ENCODE measurements at regions of chr11 and their contacts with region 1.

Region 1: GRCh38 chr11:126440792-126441514 is 85.5 kb downstream of the ST3GAL4 start:
- DNase-seq: peak in 1 of 2 donors; percentile 86
- H3K4me3 ChIP-seq: peak overlapping the region in 1 of 2 donors; percentile 26
- H3K27ac ChIP-seq: no peak overlapping the region
- H3K4me1 ChIP-seq: no peaks in the 10 kb centered on the region
- H3K27me3 ChIP-seq: no peaks in the 10 kb centered on the region
- CTCF ChIP-seq: peak; percentile 89 to 97 (median 92)

Region 2: DNA sequence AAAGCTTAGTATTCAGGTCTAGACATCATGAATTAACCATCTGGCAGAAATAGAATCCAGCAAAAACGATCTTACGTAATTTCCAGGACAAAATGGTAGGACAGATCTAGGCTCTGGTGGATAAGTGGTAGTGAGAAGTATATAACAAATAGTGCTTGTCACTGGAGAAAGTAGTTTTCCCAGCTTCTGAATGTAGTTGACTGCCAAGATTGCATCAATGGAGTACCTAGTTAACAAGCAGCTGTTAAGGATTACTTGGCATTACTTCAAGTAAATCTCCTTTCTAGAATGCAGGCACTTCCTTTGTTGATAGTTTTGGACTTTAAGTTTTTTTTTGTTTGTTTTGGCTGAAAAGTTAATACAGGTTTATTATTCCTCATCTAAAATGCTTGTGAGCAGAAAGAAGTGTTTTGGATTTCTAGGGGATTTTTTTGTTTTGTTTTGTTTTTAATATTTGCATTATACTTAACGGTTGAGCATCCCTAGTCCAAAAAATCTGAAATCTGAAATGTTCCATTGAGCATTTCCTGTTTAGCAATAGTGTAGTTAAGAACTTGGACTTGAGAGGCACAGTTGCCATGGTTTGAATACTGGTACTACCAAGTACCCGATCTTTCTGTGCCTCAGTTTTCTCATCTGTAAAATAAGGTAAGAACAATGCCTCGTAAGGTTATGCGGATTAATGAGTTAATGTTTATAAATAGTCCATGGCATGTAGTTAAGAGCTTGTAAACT is 209.1 kb before region 1 on chr11:
- intact Hi-C with region 1: no loop called
- DNase-seq: no peak
- H3K4me3 ChIP-seq: no peak overlapping the region
- H3K27ac ChIP-seq: no peak overlapping the region
- H3K4me1 ChIP-seq: no peaks in the 10 kb centered on the region
- H3K27me3 ChIP-seq: no peaks in the 10 kb centered on the region
- CTCF ChIP-seq: no peak

Region 3: DNA sequence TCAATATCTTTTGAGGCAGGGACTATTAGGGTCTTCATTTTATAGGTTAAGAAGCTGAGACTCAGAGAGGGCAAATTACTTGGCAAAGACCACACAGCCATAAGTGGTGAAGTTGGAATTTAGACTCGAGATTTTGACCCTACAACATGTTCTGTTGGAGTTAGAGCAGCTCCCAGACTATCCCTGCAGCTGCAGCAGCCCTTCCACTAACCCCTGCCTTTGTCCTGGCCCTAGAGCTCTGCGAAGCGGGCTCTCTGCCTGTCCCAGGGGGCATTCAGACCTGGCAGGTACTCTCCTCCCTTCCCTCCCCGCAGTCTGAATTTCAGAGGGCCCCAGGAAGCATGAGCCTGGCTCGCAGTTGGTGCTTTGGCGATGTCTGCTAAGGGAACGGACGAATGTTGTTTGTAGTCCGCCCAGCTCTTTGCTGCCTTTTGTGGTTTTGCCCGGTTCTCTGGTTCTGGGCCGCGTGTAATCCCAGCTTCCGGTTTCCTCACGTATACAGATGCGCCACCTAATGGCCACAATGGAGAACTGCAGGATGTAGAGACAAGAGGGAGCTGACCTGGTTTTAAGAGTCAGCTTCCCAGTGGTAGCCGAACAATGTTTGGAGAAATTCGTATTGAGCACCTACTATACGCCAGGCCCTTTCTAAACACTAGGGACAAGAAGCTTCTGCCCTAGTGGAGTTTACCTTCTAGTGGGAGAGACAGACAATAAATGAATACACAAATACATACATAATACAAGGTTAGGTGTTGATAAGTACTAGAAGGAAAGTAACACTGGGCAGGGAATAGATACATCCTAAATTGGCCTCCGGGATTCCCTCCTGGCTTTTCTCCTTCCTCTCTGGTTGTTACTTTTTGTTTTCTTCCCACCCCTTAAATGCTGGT is 39.7 kb after region 1 on chr11:
- intact Hi-C with region 1: loop called (anchors 1 kb)
- DNase-seq: peak; percentile 24 to 91
- H3K4me3 ChIP-seq: peak overlapping the region in 1 of 2 donors; percentile 52
- H3K27ac ChIP-seq: peak overlapping the region; percentile 69 to 73
- H3K4me1 ChIP-seq: no peaks in the 10 kb centered on the region
- H3K27me3 ChIP-seq: no peaks in the 10 kb centered on the region
- CTCF ChIP-seq: peak; percentile 89 to 92 (median 91)

Region 4: DNA sequence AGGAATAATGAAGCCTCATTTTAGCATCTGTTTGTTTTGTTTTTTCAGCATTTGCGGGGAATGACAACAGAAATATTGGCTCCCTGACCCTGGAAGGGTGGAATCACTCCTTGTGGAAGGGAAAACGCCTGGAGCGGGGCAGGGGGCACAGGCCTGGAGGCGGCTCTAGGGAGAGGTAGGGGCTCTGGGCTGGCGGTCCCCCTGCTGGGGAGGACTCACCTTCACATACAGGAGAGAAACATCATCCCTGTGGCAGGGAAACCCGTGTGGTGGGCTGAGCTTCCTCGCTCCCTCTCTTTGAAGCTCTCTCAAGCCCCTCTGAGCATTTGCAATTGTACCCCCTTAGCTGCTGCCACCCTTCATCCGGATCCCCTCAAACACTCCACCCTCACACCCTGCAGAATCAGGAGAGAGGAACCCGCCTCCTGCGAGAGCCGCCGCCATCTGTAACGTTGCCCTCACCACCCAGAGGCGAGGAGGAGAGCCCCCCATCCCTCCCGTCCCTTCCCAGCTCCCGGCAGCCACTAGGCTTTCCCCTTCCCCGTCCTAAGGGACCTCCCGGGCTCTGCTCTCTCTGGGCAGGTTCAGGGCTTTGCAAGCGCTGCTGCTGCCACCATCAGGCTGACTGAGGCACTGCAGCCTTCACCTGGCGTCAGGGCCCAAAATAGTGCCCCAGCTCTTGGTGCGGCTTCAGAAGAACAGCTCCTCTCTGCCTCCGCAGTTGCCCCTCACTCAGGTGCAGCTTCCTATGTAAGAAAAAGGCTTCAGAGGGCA is 549.2 kb after region 1 on chr11:
- intact Hi-C with region 1: loop called (anchors 5 kb)
- DNase-seq: peak in 1 of 2 donors; percentile 69
- H3K4me3 ChIP-seq: no peak overlapping the region
- H3K27ac ChIP-seq: no peak overlapping the region
- H3K4me1 ChIP-seq: no peaks in the 10 kb centered on the region
- H3K27me3 ChIP-seq: no peaks in the 10 kb centered on the region
- CTCF ChIP-seq: peak; percentile 41 to 71 (median 65)

Region 5: GRCh38 chr11:127345819-127346459 is 905.0 kb after region 1 on chr11:
- intact Hi-C with region 1: loop called (anchors 2 kb)
- DNase-seq: no peak
- H3K4me3 ChIP-seq: no peak overlapping the region
- H3K27ac ChIP-seq: no peak overlapping the region
- H3K4me1 ChIP-seq: no peaks in the 10 kb centered on the region
- H3K27me3 ChIP-seq: no peaks in the 10 kb centered on the region
- CTCF ChIP-seq: peak in 2 of 3 experiments; percentile 36 to 52

Measured in ascending aorta (tissue), 2 donors.